ENCODE measurements at regions of chr17 and their contacts with region 1.

Region 1: DNA sequence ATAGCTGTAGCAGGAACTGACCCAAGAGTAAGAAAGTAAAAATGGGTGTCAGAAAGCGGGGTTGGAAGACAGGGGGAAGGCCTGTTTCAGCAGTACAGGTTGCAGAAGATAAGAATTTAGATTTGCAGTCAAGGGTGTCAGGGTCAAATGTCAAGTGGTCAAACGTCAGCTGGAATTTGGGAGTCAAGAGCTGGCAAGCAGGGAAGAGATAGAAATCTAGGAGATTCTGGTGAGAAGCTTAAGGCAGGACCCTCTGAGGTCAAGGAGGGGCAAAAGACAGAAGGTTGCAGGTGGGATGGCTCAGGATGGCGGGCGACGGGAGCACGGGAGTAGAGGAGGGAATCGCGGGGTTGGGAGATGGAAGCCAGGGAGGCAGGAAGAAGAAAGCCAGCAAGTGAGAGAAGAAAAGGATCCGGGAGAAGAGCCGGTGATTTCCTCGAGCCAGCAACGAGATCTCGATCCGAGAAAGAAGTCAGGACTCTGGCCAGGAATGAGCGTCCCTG is 335 bp downstream of the SLC25A35 start:
- DNase-seq: no peak
- H3K4me3 ChIP-seq: peak overlapping the region; percentile 53 to 78 (median 63)
- H3K27ac ChIP-seq: peak overlapping the region; percentile 90 to 95 (median 92)
- H3K4me1 ChIP-seq: peaks cover 0 to 13% (median 10%) of the 10 kb centered on the region in 4 donors
- H3K27me3 ChIP-seq: no peaks in the 10 kb centered on the region
- CTCF ChIP-seq: no peak
- EP300 ChIP-seq: no peak
- POLR2A ChIP-seq: no peak

Region 2: GRCh38 chr17:8184006-8184670 is 110.7 kb before region 1 on chr17:
- intact Hi-C with region 1: loop called (anchors 5 kb)
- DNase-seq: no peak
- H3K4me3 ChIP-seq: no peak overlapping the region
- H3K27ac ChIP-seq: no peak overlapping the region
- H3K4me1 ChIP-seq: peaks cover 0 to 26% (median 20%) of the 10 kb centered on the region in 4 donors
- H3K27me3 ChIP-seq: no peaks in the 10 kb centered on the region
- CTCF ChIP-seq: no peak
- EP300 ChIP-seq: no peak
- POLR2A ChIP-seq: no peak

Region 3: GRCh38 chr17:8366231-8366630 is 71.4 kb after region 1 on chr17:
- intact Hi-C with region 1: no loop called
- DNase-seq: no peak
- H3K4me3 ChIP-seq: no peak overlapping the region
- H3K27ac ChIP-seq: peak overlapping the region in 3 of 4 donors; percentile 41 to 60 (median 45)
- H3K4me1 ChIP-seq: peaks cover 0 to 26% (median 5%) of the 10 kb centered on the region in 4 donors
- H3K27me3 ChIP-seq: no peaks in the 10 kb centered on the region
- CTCF ChIP-seq: no peak
- EP300 ChIP-seq: peak in 2 of 4 donors; percentile 28 to 32
- POLR2A ChIP-seq: no peak